Left ventricle myocardium superior (tissue), 1 donor: ENCODE measurements at regions of chr11 and their contacts with region 1.

Region 1: GRCh38 chr11:34344768-34345539 is 12.9 kb downstream of the ABTB2 start:
- DNase-seq: peak; percentile 48
- ATAC-seq: peak; percentile 20

Region 2: GRCh38 chr11:34250732-34251639 is 94.0 kb before region 1 on chr11:
- intact Hi-C with region 1: loop called (anchors 10 kb)
- DNase-seq: peak; percentile 72
- ATAC-seq: peak; percentile 94

Region 3: GRCh38 chr11:34558211-34558610 is 213.3 kb after region 1 on chr11:
- intact Hi-C with region 1: no loop called
- DNase-seq: no peak
- ATAC-seq: no peak

Region 4: DNA sequence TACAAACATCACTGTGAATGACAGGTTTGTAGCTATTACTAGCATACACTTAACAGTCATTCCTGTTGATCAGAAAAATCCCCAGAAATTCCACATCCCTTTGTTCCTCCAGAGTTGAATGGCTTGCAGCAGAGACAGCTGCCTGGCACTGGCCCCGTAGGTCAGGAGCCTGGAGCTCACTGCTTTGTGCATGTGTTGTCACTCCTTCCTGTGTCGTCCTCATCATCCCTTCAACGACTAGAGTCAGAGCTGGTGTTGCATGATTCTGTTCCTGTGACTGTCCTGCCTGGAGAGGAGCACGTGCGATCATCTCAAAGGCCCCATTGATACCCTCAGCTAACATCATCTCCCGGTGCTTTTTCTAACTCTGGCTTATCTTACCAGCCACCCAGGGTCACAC is 1657.2 kb after region 1 on chr11:
- intact Hi-C with region 1: no loop called
- DNase-seq: no peak
- ATAC-seq: no peak